Heart left ventricle (tissue), 16 donors: ENCODE measurements at regions of chr2 and their contacts with region 1.

Region 1: GRCh38 chr2:118855451-118856279 is 8.2 kb upstream of the EN1 start:
- DNase-seq: peak; percentile 68 to 87 (median 73)
- ATAC-seq: peak; percentile 76 to 95 (median 86)
- H3K4me3 ChIP-seq: peak overlapping the region in 11 of 12 donors; percentile 4 to 43 (median 29)
- H3K27ac ChIP-seq: no peak overlapping the region
- H3K4me1 ChIP-seq: peaks cover 0 to 56% (median 10%) of the 10 kb centered on the region in 12 donors
- H3K27me3 ChIP-seq: peaks cover 78 to 100% (median 98%) of the 10 kb centered on the region in 9 donors
- CTCF ChIP-seq: peak; percentile 88 to 99 (median 96)
- POLR2A ChIP-seq: no peak

Region 2: DNA sequence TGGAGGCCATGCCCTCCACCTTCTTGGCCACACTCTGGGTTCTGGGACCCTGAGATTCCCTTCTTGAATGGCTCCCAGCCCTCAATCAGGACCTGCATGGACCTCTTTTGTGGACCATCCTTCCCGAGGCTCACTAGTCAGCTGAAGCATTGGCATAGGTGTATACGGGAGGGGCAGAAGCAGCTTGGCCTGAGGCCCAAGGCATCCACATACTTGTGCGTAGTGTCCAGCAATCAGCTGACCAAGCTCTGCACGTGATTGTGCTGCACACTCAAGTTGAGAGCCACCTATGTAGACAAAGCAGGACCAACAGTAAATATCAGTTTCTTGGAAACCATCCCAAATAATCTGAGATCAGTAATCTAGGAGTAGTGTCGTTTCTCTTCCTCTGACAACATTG is 647.8 kb before region 1 on chr2:
- intact Hi-C with region 1: loop called in 2 of 10 experiments (anchors 5 to 10 kb)
- DNase-seq: no peak
- ATAC-seq: no peak
- H3K4me3 ChIP-seq: no peak overlapping the region
- H3K27ac ChIP-seq: no peak overlapping the region
- H3K4me1 ChIP-seq: no peaks in the 10 kb centered on the region
- H3K27me3 ChIP-seq: peaks cover 0 to 69% (median 13%) of the 10 kb centered on the region in 9 donors
- CTCF ChIP-seq: no peak
- POLR2A ChIP-seq: no peak

Region 3: DNA sequence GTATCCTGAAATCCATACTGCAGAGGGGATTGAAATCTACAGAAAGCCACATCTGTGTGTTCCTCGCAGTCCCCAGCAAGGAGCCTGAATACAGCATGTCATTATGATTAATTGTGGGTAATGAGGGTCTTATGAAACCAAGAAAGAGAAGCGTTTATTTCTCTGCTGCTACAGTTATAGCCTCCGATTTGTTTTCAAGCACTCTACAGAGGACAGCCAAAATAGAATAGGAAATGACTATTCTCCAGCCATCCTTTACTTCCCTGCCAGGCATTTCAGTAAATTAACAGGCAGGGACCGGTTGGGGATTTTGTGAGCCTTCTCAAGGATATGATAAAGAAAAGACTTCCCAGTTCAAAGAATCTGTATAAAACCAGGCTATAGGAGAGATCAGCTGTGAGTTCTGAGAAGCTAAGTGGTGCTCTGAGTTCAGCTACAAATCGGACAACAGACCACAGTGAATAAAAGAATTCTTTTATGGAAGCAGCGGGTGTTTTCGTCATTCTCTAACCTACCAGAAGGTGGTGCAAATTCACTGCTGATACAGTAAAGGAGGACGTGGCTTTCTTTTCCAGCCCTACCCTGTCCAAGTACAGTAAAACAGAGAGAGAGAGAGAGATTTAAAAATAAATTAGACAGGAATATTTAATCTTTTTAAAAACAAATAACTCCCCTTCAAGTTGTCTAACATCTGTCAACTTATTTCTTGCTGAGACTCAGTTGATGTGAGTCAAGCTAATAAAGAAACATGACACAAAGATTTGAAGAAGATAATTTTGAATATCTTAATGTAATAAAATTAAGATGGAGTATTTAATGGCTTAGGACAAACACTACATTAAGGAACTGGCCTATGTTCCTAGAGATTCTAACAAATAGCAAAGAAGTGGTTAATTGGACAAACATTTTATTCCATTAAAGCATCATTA is 633.7 kb before region 1 on chr2:
- intact Hi-C with region 1: loop called (anchors 1 to 5 kb)
- DNase-seq: peak in 2 of 5 donors; percentile 11 to 27
- ATAC-seq: peak; percentile 55 to 82 (median 76)
- H3K4me3 ChIP-seq: no peak overlapping the region
- H3K27ac ChIP-seq: no peak overlapping the region
- H3K4me1 ChIP-seq: peaks cover 0 to 20% (median 11%) of the 10 kb centered on the region in 12 donors
- H3K27me3 ChIP-seq: peaks cover 42 to 98% (median 80%) of the 10 kb centered on the region in 9 donors
- CTCF ChIP-seq: peak; percentile 40 to 68 (median 58)
- POLR2A ChIP-seq: no peak

Region 4: DNA sequence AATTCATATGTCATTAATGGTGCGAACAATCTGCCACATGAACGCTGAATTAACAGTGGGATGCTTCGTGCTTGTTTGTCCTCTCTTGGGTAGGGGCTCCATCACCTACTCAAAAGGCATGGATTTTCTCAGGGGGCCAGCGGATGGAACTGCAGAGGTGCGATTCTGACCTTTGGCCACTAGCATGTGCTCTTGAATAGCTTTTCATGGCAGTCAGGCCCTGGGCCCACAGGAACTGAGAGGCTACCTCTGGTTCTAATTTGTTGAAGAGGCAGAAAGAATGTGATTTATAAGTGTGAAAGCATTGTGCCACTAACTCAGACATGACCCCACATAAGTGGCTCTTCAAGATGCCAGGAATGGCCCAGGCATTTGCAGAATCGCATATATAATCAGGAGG is 484.1 kb before region 1 on chr2:
- intact Hi-C with region 1: loop called in 7 of 10 experiments (anchors 5 to 10 kb)
- DNase-seq: no peak
- ATAC-seq: peak in 1 of 4 donors; percentile 39
- H3K4me3 ChIP-seq: no peak overlapping the region
- H3K27ac ChIP-seq: no peak overlapping the region
- H3K4me1 ChIP-seq: no peaks in the 10 kb centered on the region
- H3K27me3 ChIP-seq: peaks cover 0 to 23% (median 2%) of the 10 kb centered on the region in 9 donors
- CTCF ChIP-seq: peak in 8 of 12 donors; percentile 12 to 49 (median 26)
- POLR2A ChIP-seq: no peak